Right ventricle myocardium inferior (tissue), 1 donor: ENCODE measurements at regions of chr2 and their contacts with region 1.

Region 1: DNA sequence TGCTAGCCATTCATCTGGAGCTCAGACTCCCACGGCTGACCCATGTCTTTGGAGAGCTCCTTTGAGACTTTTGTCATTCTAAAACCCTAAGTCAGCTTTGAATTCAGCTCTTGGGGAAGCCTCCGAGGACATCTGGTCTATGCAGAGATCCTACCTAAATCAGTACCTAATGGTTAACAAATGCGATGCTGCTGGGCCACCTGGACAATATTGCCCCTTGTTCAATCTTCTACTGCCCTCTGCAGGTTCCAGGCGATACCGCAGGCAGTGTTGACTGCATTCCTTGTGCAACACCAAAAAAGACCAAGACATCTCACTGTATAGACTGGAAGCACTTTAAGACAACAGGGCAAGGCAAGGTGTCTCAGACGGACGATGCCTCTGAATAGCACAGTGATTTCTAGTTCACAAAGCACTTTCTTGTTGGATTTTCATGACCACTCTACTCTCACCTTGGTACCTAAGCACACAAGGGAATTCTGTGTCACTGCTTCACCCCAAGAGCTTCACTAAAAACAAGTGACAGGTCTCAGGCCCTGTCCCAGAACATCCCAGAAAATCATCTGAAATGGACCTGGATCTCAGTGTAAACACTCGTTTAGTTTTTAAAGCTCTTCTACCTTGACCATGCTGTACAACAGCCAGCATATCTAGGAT is 80.9 kb downstream of the XDH start:
- DNase-seq: peak; percentile 83
- ATAC-seq: peak; percentile 77

Region 2: GRCh38 chr2:30862054-30862651 is 471.5 kb before region 1 on chr2:
- intact Hi-C with region 1: loop called (anchors 10 kb)
- DNase-seq: no peak
- ATAC-seq: no peak

Region 3: GRCh38 chr2:31138037-31138962 is 195.4 kb before region 1 on chr2 and contains the start of gene GALNT14:
- intact Hi-C with region 1: loop called (anchors 2 kb)
- DNase-seq: peak; percentile 81
- ATAC-seq: peak; percentile 72
- total RNA-seq, gene GALNT14: 0.38 TPM

Region 4: GRCh38 chr2:31170071-31170698 is 163.5 kb before region 1 on chr2:
- intact Hi-C with region 1: loop called (anchors 10 kb)
- DNase-seq: peak; percentile 79
- ATAC-seq: peak; percentile 77

Region 5: DNA sequence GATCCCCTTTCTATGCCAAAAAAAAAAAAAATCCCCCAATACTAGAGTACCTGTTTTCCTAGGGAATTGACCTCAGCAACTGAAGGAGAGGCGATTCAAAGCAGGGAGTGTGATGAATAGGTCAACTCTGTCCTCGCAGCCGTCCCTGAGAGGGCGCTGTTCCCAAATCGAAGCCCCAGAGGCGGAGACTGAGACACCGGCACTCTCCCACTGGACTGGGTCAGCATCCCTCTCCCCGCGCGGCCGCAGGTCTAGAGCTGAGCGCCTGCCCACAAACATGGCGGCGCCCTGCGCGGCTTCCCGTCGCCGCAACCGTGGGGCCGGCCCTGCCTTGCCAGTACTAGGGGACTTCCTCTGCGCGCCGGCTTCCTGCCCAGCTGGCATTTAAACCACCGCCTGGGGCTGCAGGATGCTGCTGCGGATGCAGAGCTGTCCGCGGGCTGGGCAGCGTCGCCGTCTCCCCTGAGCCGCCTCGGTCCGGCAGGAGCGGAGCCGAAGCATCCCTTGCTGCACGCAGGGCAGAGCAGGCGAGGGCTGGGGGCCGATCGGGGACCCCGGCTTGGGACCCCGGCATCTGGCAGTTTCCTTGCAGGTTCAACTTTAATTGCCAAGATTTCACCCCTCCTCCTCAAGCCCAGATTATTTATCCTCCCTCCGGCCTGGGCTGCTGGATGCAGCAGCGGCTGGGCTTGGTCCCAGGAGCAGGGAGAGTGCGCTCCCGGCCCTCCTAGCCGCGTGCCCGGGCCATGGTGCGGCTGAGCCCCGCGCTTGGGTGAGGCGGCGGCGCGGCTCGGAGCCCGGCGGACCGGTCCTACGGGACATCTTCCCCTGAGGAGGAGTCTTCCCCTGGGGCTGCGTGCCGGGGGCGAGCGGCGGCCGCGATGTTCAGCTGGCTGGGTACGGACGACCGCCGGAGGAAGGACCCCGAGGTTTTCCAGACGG is 99.6 kb before region 1 on chr2 and contains the start of gene EHD3:
- intact Hi-C with region 1: loop called (anchors 5 kb)
- DNase-seq: peak; percentile 95
- ATAC-seq: peak; percentile 92
- total RNA-seq, gene EHD3: 27.9 TPM